Brain microvascular endothelial cell (primary cell): ENCODE measurements at regions of chr1 and their contacts with region 1.

Region 1: DNA sequence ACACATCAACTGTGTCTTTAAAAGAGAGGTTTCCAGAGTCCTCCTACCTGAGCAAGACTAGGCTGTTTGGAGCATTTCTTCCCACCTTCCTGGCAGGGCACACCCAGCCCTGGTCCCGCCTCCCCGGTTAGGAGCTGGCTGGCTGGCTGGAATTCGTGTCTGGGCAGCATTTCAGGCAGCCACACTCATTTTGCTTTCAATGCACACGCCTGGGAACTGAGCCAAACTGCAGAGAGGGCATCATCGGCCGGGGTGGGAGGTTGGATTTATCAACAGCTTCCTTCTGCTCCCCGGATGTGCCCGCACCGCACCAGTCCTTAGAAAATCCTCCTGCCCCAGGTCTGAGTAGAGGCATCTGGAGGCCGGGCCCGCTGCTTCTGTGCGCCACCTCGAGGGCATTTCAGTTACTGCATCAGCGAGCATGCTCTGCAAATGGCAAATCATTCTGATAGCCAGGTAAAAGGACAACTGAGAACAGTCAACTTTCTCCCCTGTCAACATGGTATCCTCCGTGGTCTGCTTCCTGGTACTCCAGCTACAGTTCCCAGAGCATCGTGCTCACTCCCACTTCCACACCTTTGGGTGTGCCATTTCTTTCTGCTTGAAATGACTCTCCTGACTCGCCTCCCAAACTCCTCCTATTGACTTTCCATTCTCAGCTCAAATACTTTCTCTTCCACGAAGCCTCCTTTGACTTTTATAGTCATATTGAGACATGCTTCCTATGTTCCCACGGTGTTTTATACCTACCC is 20.6 kb downstream of the TCEA3 start:
- DNase-seq: peak; percentile 83
- H3K4me3 ChIP-seq: peak overlapping the region; percentile 15
- H3K27ac ChIP-seq: peak overlapping the region; percentile 71
- H3K27me3 ChIP-seq: no peaks in the 10 kb centered on the region
- CTCF ChIP-seq: peak; percentile 98

Region 2: DNA sequence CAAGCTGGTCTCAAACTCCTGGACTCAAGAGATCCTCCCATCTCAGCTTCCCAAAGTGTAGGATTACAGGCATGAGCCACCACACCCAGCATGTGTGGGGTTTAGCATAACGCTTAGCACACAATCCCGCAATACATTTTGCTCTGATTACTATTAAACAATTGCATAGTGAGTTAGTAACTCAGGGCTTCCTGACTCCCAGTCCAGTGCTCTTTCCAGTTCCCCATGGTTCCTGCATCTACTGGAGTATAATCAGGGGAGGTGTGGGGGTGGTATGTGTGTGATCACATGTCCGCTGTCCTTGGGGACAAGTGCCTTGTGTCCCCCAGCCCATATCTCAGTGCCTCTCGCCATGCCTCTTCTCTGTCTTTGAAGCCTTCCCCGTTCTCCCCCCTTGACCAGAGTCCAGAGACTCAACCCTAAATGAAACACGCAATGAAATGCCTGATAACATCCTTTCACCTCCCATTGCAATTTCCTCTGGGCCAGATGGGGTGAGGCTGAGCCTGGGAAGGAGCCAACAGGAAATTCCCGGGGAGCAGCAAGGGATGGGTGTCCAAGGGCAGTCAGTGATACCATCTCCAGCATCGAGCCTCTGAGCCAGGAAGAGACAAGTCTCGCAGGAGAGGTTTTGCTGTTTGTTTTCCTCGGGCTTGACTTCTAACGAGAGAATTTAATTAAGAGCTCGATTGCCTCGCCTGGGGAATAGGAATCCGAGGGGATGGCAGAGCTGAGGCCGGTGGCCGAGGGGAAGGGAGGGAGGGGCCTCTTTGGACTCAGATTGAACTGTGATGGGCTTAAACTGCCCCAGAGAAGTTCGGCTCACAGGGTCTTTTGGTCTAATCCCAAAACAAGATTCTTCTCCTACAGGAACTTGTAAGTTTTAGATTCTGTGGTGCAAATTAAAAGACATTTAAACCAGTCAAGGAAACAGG is 178.9 kb before region 1 on chr1:
- in situ Hi-C with region 1: no loop called
- DNase-seq: peak; percentile 51
- H3K4me3 ChIP-seq: no peak overlapping the region
- H3K27ac ChIP-seq: peak overlapping the region; percentile 19
- H3K27me3 ChIP-seq: no peaks in the 10 kb centered on the region
- CTCF ChIP-seq: no peak

Region 3: DNA sequence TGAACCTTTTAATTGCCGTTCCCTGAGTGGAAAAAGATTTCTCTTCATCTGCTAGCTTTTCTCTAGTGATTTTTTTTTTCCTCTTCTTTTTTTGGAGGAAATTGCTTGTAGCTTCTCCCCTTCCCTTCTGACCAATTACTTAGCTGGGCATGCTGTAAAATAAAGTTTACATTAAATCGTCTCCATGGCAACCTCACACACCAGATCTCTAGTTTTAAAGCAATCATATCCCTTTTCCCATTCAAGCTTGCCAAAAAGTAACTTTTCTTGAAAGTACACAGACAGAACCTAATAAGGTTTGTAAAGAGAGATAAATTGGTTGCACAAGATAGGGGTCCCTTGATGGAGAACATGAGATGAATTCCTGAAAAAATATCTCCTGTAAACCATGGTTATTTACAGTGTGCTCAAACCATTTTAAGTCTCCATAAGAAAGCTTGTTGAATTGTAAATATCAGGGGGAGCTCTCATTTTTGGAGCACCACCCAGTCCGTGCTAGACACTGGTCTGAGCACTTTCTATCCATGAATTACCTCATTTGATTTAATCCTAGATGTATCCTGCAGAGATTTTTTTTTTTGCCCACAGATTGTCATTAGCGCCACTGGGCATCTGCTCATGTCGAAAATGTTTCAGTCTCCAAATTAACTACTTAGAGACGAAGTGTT is 154.0 kb before region 1 on chr1:
- in situ Hi-C with region 1: no loop called
- DNase-seq: no peak
- H3K4me3 ChIP-seq: no peak overlapping the region
- H3K27ac ChIP-seq: no peak overlapping the region
- H3K27me3 ChIP-seq: no peaks in the 10 kb centered on the region
- CTCF ChIP-seq: no peak

Region 4: DNA sequence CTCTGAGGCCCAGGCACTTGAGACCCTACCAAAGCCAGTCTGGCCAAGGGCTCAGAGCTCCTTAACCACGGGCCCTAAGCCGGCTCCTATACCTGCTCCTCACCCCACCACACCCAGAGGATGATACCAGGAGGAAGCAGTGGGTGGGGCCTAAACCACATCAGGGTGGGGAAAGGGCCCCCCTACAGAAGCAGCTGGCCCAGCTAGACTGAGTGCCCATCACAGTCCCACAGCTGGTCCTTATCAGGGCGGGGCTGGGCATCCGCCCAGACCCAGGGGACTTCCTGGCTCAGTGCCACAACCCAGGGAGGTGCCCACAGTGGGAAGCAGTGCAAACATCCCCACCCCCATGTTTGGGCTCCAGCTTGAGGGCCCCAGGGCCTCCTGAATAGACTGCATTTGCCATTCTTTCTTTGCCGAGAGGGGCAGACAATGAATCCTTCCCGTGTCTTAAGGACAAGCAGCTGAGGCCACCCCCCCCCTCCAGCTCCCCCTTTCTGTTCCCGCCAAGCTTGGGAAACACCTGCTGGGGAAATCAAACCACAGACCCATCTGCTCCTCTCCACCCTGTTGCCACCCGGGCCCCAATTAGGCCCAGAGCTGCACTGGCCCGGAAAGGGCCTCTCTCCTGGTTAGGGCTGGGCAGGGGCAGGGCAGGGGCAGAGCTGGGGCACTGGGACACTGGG is 120.9 kb after region 1 on chr1:
- in situ Hi-C with region 1: loop called (anchors 25 kb)
- DNase-seq: no peak
- H3K4me3 ChIP-seq: no peak overlapping the region
- H3K27ac ChIP-seq: no peak overlapping the region
- H3K27me3 ChIP-seq: no peaks in the 10 kb centered on the region
- CTCF ChIP-seq: no peak

Region 5: GRCh38 chr1:23554481-23555269 is 150.8 kb after region 1 on chr1:
- in situ Hi-C with region 1: no loop called
- DNase-seq: peak; percentile 85
- H3K4me3 ChIP-seq: peak overlapping the region; percentile 48
- H3K27ac ChIP-seq: peak overlapping the region; percentile 100
- H3K27me3 ChIP-seq: no peaks in the 10 kb centered on the region
- CTCF ChIP-seq: peak; percentile 44